Caco-2 (cell line): ENCODE measurements at regions of chr20 and their contacts with region 1.

Region 1: DNA sequence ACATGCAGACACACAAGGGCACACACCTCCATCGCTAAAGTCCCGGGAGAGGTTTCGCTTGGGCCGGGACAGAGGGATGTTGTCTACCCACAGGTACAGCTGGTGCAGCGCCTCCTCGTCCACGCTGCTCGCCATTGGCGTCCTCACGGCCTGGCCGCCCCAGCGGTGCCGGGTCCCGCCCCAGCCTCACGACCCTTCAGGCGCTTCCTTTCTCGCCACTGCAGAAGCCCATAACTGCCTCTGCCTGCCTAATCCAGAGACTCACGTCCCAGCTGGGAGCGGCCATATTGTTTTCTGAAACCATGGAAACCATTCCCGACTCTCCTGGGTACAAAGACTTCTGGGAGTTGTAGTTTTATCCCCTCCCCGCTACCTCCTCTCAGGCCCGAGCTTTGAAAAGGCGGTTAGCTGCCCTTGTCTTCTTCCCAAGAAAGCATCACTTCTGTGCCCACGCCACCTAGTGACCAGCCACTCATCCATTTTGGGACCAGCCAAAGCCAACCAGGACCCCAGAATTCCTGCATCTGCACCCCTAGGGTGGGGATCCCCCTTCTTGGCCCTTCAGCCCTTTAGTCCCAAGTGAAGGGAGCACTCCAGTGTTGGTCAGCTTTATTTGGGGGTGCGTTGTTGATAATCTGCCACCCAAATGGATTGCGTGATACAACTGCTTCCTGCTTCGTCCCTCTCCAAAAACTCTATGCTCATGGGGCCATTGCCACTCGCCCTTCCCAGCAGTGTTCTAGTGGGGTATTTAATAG is at the start of gene SPEF1:
- DNase-seq: peak; percentile 93 to 95
- H3K4me3 ChIP-seq: peak within 1 kb of the TSS; percentile 42
- H3K4me3 Mint-ChIP-seq: peak within 1 kb of the TSS; percentile 69
- H3K27ac Mint-ChIP-seq: peak within 1 kb of the TSS; percentile 69
- H3K4me1 ChIP-seq: peaks cover 25% of the 10 kb centered on the region
- H3K4me1 Mint-ChIP-seq: no peaks in the 10 kb centered on the region
- H3K27me3 ChIP-seq: no peaks in the 10 kb centered on the region
- H3K27me3 Mint-ChIP-seq: peaks cover 3% of the 10 kb centered on the region
- CTCF ChIP-seq: peak; percentile 55 to 60
- total RNA-seq, gene SPEF1: not detected in 2 replicates

Region 2: GRCh38 chr20:3679749-3680700 is 101.3 kb before region 1 on chr20:
- CTCF ChIA-PET with region 1: interaction called, 18 read pairs
- POLR2A ChIA-PET with region 1: no interaction called
- intact Hi-C with region 1: no loop called
- DNase-seq: no peak
- H3K4me3 ChIP-seq: no peak overlapping the region
- H3K4me3 Mint-ChIP-seq: no peak overlapping the region
- H3K27ac Mint-ChIP-seq: no peak overlapping the region
- H3K4me1 ChIP-seq: no peaks in the 10 kb centered on the region
- H3K4me1 Mint-ChIP-seq: no peaks in the 10 kb centered on the region
- H3K27me3 ChIP-seq: no peaks in the 10 kb centered on the region
- H3K27me3 Mint-ChIP-seq: peaks cover 11% of the 10 kb centered on the region
- CTCF ChIP-seq: no peak

Region 3: GRCh38 chr20:3716195-3716834 is 65.0 kb before region 1 on chr20:
- CTCF ChIA-PET with region 1: interaction called, 7 read pairs
- POLR2A ChIA-PET with region 1: no interaction called
- intact Hi-C with region 1: loop called (anchors 2 kb)
- DNase-seq: peak; percentile 77
- H3K4me3 ChIP-seq: no peak overlapping the region
- H3K4me3 Mint-ChIP-seq: no peak overlapping the region
- H3K27ac Mint-ChIP-seq: peak overlapping the region; percentile 6
- H3K4me1 ChIP-seq: no peaks in the 10 kb centered on the region
- H3K4me1 Mint-ChIP-seq: no peaks in the 10 kb centered on the region
- H3K27me3 ChIP-seq: no peaks in the 10 kb centered on the region; the same call in 1 of the 2 replicates
- H3K27me3 Mint-ChIP-seq: no peaks in the 10 kb centered on the region
- CTCF ChIP-seq: peak; percentile 80 to 94

Region 4: DNA sequence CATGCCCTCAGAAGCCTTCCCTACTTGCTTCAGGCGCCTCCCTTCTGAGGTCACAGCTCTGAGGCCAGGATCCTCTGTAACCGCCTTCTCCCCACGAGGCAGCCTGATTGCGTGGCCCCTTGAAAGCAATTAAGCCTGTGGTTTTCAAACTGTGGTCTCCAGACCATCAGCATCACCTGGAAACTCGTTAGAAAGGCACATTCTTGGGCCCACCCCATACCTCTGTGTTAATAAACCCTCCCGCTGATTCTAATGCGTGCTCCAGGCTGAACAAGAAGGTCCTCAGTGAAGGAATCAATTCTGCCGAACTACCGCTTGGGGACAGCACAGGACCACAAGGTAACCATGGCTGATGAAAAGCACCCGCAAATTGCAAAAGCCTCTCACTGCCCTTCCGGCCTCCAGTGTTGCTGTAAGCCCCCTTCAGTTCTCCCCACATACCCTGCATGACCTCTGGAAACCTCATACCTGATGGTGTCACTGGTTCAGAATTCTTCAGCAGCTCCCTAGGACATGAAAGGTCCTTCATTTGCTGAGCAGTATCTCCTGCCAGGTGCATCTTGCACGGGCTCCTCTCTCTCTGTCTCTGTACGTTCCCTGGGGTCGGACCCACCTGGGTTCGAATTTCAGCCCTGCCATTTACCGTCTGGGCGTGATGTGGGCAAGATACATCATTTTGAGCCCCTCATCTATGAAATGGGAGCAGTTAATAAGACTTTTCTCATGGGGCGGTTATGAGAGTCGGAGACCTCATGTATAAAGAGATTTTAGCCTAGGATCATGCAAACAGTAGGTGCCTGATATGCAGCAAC is 327.4 kb after region 1 on chr20:
- CTCF ChIA-PET with region 1: no interaction called
- POLR2A ChIA-PET with region 1: no interaction called
- intact Hi-C with region 1: no loop called
- DNase-seq: peak; percentile 87 to 88
- H3K4me3 ChIP-seq: no peak overlapping the region
- H3K4me3 Mint-ChIP-seq: no peak overlapping the region
- H3K27ac Mint-ChIP-seq: peak overlapping the region; percentile 77
- H3K4me1 ChIP-seq: peaks cover 8% of the 10 kb centered on the region
- H3K4me1 Mint-ChIP-seq: peaks cover 12% of the 10 kb centered on the region
- H3K27me3 ChIP-seq: no peaks in the 10 kb centered on the region
- H3K27me3 Mint-ChIP-seq: no peaks in the 10 kb centered on the region
- CTCF ChIP-seq: peak; percentile 96 to 97